Activated B cell treated with CpG ODN at 0.5 μM for 24 hours (primary cell): ENCODE measurements at regions of chr5 and their contacts with region 1.

Region 1: GRCh38 chr5:173057062-173057924 is 1.1 kb downstream of the CREBRF start:
- DNase-seq: peak; percentile 98
- ATAC-seq: peak; percentile 80
- H3K4me3 Mint-ChIP-seq: peak overlapping the region; percentile 96
- H3K27ac Mint-ChIP-seq: peak overlapping the region; percentile 95
- H3K4me1 Mint-ChIP-seq: peaks cover 55% of the 10 kb centered on the region
- H3K27me3 Mint-ChIP-seq: no peaks in the 10 kb centered on the region
- CTCF ChIP-seq: no peak

Region 2: GRCh38 chr5:172006321-172007174 is 1050.7 kb before region 1 on chr5 and contains the start of gene FBXW11:
- CTCF ChIA-PET with region 1: no interaction called
- POLR2A ChIA-PET with region 1: interaction called, 5 read pairs
- intact Hi-C with region 1: loop called (anchors 2 kb)
- DNase-seq: peak; percentile 87
- ATAC-seq: peak; percentile 84
- H3K4me3 Mint-ChIP-seq: peak within 1 kb of the TSS; percentile 93
- H3K27ac Mint-ChIP-seq: peak within 1 kb of the TSS; percentile 96
- H3K4me1 Mint-ChIP-seq: peaks cover 51% of the 10 kb centered on the region
- H3K27me3 Mint-ChIP-seq: no peaks in the 10 kb centered on the region
- CTCF ChIP-seq: no peak
- total RNA-seq, gene FBXW11: 46.5 and 52.7 TPM in 2 replicates

Region 3: DNA sequence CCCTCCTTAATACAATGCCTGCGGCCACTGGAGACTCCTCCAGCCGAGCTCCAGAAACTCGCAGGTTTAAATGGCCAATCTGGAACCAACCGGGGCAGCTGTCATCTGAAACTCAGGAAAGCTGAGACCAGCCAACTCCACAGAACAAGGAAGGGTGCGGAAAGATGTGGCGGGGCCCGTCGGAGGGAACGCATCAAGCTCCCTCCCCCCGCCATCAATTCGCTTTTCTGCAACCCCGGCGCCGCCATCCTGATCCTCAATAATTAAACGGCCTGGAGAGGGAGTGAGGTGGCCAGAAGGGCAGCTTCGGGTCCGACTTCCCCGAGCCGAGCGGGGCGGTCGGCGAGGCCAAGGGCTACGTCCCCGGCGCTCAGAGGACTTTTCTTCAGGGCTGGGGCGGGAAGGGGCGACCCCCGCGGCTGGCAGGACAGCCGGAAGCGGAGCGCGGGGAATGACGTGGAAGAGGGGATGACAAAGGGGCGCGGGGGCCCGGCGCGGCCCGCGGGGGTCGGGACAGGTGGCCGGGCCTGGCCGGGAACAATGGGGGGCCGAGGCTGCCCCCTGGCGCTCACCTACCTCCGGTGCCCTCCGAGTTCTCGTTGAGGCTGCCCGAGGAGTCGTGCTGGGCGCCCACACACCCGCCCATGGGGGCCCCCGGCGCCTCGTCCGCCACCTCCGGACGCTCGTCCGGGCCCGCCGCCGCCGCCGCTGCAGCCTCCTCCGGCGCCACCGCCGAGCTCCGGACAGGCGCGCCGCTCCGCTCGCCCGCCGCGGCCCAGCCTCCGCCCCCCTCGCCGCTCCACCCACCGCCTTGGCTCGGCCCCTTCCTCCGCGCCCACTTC is 774.1 kb before region 1 on chr5 and contains the start of gene UBTD2:
- CTCF ChIA-PET with region 1: no interaction called
- POLR2A ChIA-PET with region 1: no interaction called
- intact Hi-C with region 1: loop called (anchors 1 kb)
- DNase-seq: peak; percentile 90
- ATAC-seq: peak; percentile 88
- H3K4me3 Mint-ChIP-seq: peak within 1 kb of the TSS; percentile 90
- H3K27ac Mint-ChIP-seq: peak within 1 kb of the TSS; percentile 68
- H3K4me1 Mint-ChIP-seq: peaks cover 23% of the 10 kb centered on the region
- H3K27me3 Mint-ChIP-seq: no peaks in the 10 kb centered on the region
- CTCF ChIP-seq: peak; percentile 50
- total RNA-seq, gene UBTD2: 8.5 and 9.0 TPM in 2 replicates

Region 4: GRCh38 chr5:172833686-172834414 is 223.4 kb before region 1 on chr5 and contains the start of gene ERGIC1:
- CTCF ChIA-PET with region 1: no interaction called
- POLR2A ChIA-PET with region 1: no interaction called
- intact Hi-C with region 1: loop called (anchors 2 kb)
- DNase-seq: peak; percentile 79
- ATAC-seq: peak; percentile 78
- H3K4me3 Mint-ChIP-seq: peak within 1 kb of the TSS; percentile 89
- H3K27ac Mint-ChIP-seq: peak within 1 kb of the TSS; percentile 92
- H3K4me1 Mint-ChIP-seq: peaks cover 48% of the 10 kb centered on the region
- H3K27me3 Mint-ChIP-seq: no peaks in the 10 kb centered on the region
- CTCF ChIP-seq: no peak
- total RNA-seq, gene ERGIC1: 69.6 and 72.5 TPM in 2 replicates

Region 5: DNA sequence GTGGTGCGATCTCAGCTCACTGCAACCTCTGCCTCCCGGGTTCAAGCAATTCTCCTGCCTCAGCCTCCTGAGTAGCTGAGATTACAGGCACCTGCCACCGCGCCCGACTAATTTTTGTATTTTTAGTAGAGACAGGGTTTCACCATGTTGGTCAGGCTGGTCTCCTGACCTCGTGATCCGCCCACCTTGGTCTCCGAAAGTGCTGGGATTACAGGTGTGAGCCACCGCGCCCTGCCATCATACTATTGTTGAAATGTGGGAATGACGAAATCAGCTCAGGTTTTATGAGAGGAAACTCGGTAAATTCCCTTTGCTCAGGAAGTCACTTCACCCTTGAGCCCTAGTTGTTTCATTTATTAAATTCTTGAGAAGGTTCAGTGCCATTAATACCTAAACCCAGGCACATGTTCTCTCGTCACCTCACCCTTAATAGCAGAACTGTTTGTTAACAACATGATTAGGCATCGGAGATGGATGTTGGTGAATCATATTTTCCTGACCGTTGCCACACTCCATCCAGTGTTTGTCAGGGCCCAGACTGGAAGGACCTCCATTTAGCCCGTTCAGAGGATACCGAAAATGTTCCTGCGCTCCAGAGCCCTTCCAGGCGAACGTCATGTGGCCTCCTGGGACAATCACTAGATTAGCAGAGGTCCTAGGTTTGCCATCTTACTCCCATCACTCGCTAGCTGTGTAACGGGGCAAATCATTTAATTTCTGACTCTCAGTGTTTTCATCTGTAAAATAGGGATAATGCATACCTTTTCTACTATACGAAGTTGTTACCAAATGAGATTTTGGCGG is 21.2 kb before region 1 on chr5:
- CTCF ChIA-PET with region 1: interaction called, 10 read pairs
- POLR2A ChIA-PET with region 1: interaction called, 27 read pairs
- intact Hi-C with region 1: loop called (anchors 1 kb)
- DNase-seq: peak; percentile 17
- ATAC-seq: peak; percentile 59
- H3K4me3 Mint-ChIP-seq: peak overlapping the region; percentile 82
- H3K27ac Mint-ChIP-seq: peak overlapping the region; percentile 91
- H3K4me1 Mint-ChIP-seq: peaks cover 57% of the 10 kb centered on the region
- H3K27me3 Mint-ChIP-seq: no peaks in the 10 kb centered on the region
- CTCF ChIP-seq: no peak

Region 6: DNA sequence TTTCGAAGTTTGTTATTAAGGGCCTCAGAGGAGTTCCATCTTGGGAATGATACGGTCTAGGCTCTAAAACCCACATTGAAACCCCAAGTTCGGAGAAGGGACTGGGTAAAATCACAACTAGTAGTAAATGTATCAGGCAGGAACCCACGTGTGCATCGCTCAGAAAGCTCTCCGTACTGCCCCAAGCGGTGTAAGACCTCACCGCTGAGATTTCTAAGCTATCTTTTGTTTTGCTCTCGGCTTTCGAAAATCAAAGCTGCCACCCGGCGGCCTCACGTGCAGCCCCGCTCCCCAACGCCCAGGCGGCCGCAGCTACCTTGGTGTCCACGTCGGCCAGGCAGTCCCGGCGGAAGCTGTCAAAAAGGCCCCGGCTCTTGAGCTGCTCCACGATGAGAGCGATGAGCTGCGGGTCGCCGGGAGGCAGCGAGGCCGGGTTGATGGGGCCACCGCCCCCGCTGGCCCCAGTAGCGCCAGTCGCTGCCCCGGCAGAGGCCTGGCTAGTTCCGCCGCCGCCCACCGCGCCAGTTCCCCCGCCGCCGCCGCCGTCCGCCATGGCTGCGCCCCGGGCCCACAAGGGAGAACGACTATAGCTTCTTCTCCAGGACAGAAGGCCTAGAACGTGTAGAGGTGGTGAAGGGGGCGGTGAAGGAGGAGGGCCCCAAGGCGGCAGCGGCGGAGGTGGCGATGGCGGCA is 558.7 kb after region 1 on chr5:
- CTCF ChIA-PET with region 1: no interaction called
- POLR2A ChIA-PET with region 1: no interaction called
- intact Hi-C with region 1: loop called (anchors 1 kb)
- DNase-seq: peak; percentile 63
- ATAC-seq: peak; percentile 47
- H3K4me3 Mint-ChIP-seq: peak overlapping the region; percentile 92
- H3K27ac Mint-ChIP-seq: peak overlapping the region; percentile 88
- H3K4me1 Mint-ChIP-seq: peaks cover 41% of the 10 kb centered on the region
- H3K27me3 Mint-ChIP-seq: no peaks in the 10 kb centered on the region
- CTCF ChIP-seq: no peak